ENCODE measurements at regions of chr5 and their contacts with region 1.

Region 1: DNA sequence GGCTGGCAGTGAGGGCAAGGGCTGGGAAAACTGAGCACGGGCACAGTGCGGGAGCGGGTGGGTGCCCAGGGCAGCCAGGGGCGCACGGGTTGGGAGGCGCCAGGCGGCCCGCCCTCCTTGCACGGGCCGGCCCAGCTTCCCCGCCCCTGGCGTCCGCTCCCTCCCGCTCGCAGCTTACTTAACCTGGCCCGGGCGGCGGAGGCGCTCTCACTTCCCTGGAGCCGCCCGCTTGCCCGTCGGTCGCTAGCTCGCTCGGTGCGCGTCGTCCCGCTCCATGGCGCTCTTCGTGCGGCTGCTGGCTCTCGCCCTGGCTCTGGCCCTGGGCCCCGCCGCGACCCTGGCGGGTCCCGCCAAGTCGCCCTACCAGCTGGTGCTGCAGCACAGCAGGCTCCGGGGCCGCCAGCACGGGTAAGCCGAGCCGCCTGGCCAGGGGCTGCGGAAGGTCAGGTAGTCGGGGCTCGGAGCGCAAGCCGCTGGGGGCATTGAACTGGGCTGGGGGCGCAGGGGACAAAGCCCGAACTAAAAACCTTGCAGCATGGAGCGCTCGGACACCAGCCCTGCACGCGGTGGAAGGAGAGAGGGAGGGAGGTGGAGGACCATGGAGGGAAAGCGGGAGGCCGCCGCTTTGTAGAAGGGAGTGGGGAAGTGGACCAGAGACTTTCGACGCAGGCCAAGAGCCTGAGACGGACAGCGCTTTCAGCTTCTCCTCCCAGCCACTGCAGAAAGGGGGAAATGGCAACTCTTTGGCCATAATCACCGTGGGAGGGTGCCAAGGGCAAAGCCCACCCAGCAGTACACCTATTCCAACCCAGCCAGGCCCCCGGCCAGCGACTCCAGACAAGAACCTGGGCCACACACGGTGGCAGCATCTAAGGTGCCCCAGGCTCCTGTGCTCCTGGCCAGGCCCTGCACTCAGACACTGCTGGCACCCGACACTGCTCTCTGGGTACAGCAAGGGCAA is at the start of gene TGFBI:
- DNase-seq: peak; percentile 72
- ATAC-seq: peak; percentile 93
- H3K4me3 Mint-ChIP-seq: peak within 1 kb of the TSS; percentile 72
- H3K27ac Mint-ChIP-seq: no peak within 1 kb of the TSS
- H3K4me1 Mint-ChIP-seq: peaks cover 3% of the 10 kb centered on the region
- H3K27me3 Mint-ChIP-seq: peaks cover 70% of the 10 kb centered on the region
- CTCF ChIP-seq: no peak
- total RNA-seq, gene TGFBI: 7.2 to 9.1 TPM (median 7.8 TPM) in 3 replicates

Region 2: DNA sequence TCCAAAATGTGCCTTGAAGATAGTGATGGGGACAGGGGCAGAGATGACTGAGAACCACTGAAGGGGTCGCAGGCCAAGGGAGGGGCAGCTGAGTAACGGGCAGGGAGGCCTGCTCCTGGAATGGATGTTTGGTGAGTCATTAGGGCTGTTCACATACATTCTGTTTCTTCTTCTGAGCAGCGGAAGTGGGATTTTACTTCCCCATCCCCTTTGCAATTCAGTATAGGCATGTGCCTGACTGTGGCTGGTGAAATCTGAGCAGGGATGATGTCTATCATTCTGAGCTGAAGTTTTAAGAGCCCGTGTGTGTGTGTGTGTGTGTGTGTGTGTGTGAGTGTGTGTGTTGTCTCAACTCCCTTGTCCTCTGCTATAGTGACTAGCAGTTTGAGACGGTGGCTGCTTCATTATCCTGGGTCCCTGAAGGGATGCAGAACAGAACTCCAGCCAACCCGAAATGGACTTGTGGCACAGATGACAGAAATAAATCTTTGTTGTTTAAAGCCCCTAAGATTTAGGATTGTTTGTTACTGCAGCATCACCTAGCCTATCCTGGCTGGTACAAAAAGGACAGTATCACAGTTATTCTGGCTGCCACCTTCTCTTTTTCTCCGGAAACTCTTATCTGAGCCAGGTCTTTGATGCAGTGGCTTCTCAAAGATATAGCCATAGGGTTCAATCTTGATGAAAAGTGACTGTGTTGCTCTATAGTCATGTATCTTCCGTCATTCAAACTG is 29.5 kb before region 1 on chr5:
- CTCF ChIA-PET with region 1: interaction called, 10 read pairs
- POLR2A ChIA-PET with region 1: no interaction called
- DNase-seq: no peak
- ATAC-seq: no peak
- H3K4me3 Mint-ChIP-seq: no peak overlapping the region
- H3K27ac Mint-ChIP-seq: no peak overlapping the region
- H3K4me1 Mint-ChIP-seq: no peaks in the 10 kb centered on the region
- H3K27me3 Mint-ChIP-seq: no peaks in the 10 kb centered on the region; the same call in 1 of the 2 replicates
- CTCF ChIP-seq: no peak

Region 3: DNA sequence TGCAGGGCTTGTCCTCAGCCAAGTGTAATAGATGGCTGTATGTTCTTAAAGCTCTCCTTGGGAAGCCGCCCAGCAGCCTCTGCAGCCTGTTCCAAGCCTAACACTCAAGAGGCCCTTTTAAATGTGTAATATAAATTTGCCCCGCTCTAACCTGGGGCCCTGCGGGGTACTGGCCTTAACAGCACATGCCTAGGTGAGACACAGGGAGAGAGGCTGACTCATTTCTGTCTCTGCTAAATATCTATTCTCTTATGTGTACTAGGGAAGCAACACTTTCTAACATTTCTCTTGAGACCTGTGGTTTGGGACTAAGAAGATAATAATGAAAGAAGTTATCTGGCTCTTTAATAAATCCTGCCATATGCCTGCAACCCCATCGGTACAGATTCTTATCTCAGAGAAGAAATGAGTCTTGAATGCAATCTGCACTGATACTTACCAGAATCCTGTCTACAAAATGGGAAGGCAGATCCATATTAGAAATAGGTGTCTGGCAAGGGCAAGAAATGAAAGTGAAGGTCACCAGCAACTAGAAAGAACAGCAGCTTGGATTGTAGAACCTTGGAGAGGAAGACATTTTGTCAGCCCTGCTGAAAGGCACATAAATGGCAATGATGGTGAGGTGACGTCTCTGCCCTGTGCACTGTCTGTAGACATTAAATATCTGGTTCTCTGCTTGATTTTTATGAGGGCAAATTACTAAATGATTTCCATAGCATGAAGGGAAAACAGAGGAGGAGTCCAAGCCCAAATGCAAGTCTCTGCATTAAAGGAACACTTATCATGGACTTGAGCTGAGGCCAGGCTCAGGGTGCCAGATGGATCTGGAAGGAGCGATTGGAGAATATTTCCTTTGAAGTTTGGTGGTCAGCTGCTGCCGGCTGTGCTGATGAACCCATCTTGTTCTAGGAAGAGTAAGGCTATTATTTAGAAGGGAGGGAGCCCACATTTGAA is 14.7 kb before region 1 on chr5:
- CTCF ChIA-PET with region 1: no interaction called
- POLR2A ChIA-PET with region 1: no interaction called
- DNase-seq: no peak
- ATAC-seq: no peak
- H3K4me3 Mint-ChIP-seq: no peak overlapping the region
- H3K27ac Mint-ChIP-seq: no peak overlapping the region
- H3K4me1 Mint-ChIP-seq: peaks cover 3% of the 10 kb centered on the region; the same call in 1 of the 2 replicates
- H3K27me3 Mint-ChIP-seq: peaks cover 5% of the 10 kb centered on the region; the same call in 1 of the 2 replicates
- CTCF ChIP-seq: no peak